Activated B cell treated with CpG ODN at 0.5 μM for 24 hours (primary cell): ENCODE measurements at regions of chr12 and their contacts with region 1.

Region 1: DNA sequence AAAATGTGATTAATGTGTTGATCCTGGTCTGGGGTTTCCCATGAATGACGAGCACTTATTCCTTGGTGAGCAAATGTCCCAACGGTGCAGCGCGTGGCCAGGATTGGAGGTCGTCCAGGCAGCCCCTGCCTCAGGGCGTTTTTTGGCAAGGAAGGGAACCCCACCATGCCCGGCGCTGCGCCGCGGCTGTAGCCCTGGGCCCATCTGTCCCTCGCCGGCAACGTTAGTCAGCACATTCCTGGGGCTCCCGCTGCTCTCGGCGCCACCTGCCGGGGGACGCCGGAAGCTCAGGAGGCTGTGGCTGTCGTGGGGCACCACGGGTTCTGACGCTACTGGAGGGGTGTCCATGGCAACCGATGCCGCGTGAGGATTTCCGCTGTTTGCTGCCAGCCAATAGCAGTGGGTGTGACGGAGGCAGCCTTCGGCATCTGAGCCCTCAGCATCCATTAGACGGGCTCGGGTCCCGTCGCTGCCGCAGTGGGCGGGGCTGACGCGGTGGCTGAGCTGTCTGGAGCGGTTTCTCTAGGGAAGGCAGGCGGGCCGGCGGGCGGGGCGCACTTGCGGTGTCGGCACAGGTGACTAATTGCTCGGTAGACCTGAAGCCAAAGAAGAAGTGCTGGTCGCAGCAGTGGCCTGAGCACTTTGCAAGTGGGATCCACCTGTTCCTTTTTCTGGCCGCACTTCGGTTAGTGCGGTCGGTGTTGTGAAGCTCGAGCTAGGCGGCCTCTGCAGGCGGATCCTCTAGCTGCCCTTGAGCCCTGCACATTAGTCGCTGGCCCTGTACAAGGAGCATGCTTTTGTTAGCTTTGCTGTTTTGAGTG is 29.5 kb downstream of the RAB35 start:
- DNase-seq: peak; percentile 98
- ATAC-seq: peak; percentile 93
- H3K4me3 Mint-ChIP-seq: peak overlapping the region; percentile 76
- H3K27ac Mint-ChIP-seq: peak overlapping the region; percentile 81
- H3K4me1 Mint-ChIP-seq: peaks cover 11% of the 10 kb centered on the region
- H3K27me3 Mint-ChIP-seq: no peaks in the 10 kb centered on the region
- CTCF ChIP-seq: peak; percentile 74

Region 2: GRCh38 chr12:118958520-118958919 is 1128.5 kb before region 1 on chr12:
- CTCF ChIA-PET with region 1: no interaction called
- POLR2A ChIA-PET with region 1: no interaction called
- intact Hi-C with region 1: no loop called
- DNase-seq: no peak
- ATAC-seq: no peak
- H3K4me3 Mint-ChIP-seq: no peak overlapping the region
- H3K27ac Mint-ChIP-seq: no peak overlapping the region
- H3K4me1 Mint-ChIP-seq: no peaks in the 10 kb centered on the region
- H3K27me3 Mint-ChIP-seq: peaks cover 2% of the 10 kb centered on the region
- CTCF ChIP-seq: no peak

Region 3: GRCh38 chr12:119681961-119682638 is 404.9 kb before region 1 on chr12:
- CTCF ChIA-PET with region 1: no interaction called
- POLR2A ChIA-PET with region 1: no interaction called
- intact Hi-C with region 1: loop called (anchors 5 kb)
- DNase-seq: no peak
- ATAC-seq: peak; percentile 71
- H3K4me3 Mint-ChIP-seq: peak overlapping the region; percentile 78
- H3K27ac Mint-ChIP-seq: peak overlapping the region; percentile 96
- H3K4me1 Mint-ChIP-seq: peaks cover 41% of the 10 kb centered on the region
- H3K27me3 Mint-ChIP-seq: no peaks in the 10 kb centered on the region
- CTCF ChIP-seq: no peak

Region 4: DNA sequence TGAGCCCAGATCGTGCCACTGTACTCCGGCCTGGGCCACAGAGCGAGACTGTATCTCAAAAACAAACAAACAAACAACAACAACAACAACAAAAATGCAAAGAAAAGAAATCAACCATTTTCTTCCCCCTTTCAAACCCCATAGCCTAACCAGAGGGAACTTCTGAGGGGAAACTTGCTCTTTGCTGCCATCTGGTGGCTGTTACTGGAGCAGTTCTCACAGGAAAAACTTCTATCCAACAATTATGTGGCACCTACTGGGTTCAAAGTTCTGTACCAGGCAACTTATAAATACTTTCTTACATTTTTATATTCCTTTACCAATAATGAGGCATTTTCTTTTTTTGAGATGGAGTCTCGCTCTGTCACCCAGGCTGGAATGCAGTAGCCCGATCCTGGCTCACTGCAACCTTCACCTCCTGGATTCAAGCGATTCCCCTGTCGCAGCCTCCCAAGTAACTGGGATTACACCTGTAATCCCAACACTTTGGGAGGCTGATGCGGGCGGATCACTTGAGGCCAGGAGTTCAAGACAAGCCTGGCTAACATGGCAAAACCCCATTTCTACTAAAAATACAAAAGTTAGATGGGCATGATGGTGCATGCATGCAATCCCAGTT is 148.9 kb before region 1 on chr12:
- CTCF ChIA-PET with region 1: no interaction called
- POLR2A ChIA-PET with region 1: no interaction called
- intact Hi-C with region 1: loop called (anchors 2 kb)
- DNase-seq: peak; percentile 19
- ATAC-seq: peak; percentile 62
- H3K4me3 Mint-ChIP-seq: no peak overlapping the region
- H3K27ac Mint-ChIP-seq: no peak overlapping the region
- H3K4me1 Mint-ChIP-seq: no peaks in the 10 kb centered on the region
- H3K27me3 Mint-ChIP-seq: peaks cover 10% of the 10 kb centered on the region
- CTCF ChIP-seq: peak; percentile 93

Region 5: GRCh38 chr12:120012067-120012621 is 74.9 kb before region 1 on chr12:
- CTCF ChIA-PET with region 1: no interaction called
- POLR2A ChIA-PET with region 1: interaction called, 4 read pairs
- intact Hi-C with region 1: loop called (anchors 1 kb)
- DNase-seq: no peak
- ATAC-seq: peak; percentile 81
- H3K4me3 Mint-ChIP-seq: peak overlapping the region; percentile 57
- H3K27ac Mint-ChIP-seq: peak overlapping the region; percentile 87
- H3K4me1 Mint-ChIP-seq: peaks cover 56% of the 10 kb centered on the region
- H3K27me3 Mint-ChIP-seq: no peaks in the 10 kb centered on the region
- CTCF ChIP-seq: no peak

Region 6: DNA sequence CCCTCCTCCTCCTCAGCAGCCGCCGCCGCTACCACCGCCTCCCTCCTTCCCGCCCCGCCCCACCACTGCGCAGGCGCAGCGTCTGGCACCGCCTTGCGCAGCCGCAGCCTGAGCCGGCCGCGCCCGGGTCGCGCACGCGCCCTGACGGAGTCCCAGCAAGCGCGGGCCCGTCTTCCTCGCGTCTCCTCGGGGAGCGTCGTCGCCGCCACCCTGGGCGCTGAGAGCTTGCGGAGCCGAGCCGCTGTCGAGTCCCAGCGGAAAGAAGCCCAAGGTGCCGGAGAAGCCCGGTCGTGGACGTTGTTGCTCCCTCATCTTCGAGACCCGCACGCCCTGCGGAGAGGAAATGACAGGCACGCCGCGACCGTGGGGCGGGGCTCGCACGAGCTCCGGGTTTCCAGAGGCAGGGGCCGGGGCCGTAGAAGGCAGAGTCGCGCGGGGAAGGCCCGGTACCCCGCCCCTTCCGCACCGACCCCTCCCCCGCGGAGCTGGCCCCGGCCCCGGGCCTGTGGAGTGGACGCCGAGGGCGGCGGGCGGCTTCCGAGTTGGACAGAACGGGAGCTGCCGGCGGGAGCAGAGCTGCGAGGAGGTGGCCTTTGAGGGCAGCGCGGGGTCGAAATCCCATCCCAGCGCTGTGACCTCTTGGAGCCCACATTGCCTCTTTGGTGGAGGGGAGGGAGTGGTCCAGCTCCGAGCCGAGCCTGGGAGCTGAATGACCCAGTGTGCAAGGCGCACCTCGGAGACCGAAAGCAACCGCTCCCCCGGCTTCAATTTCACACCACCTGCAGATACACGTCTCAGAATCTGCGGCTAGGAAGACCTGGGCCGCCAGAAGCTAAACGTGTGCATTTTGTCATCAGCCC is 30.0 kb after region 1 on chr12:
- CTCF ChIA-PET with region 1: interaction called, 12 read pairs
- POLR2A ChIA-PET with region 1: interaction called, 16 read pairs
- intact Hi-C with region 1: loop called (anchors 1 kb)
- DNase-seq: peak; percentile 99
- ATAC-seq: peak; percentile 76
- H3K4me3 Mint-ChIP-seq: peak overlapping the region; percentile 78
- H3K27ac Mint-ChIP-seq: peak overlapping the region; percentile 83
- H3K4me1 Mint-ChIP-seq: peaks cover 76% of the 10 kb centered on the region
- H3K27me3 Mint-ChIP-seq: no peaks in the 10 kb centered on the region
- CTCF ChIP-seq: no peak